CD14-positive monocyte (primary cell): ENCODE measurements at regions of chr17 and their contacts with region 1.

Region 1: DNA sequence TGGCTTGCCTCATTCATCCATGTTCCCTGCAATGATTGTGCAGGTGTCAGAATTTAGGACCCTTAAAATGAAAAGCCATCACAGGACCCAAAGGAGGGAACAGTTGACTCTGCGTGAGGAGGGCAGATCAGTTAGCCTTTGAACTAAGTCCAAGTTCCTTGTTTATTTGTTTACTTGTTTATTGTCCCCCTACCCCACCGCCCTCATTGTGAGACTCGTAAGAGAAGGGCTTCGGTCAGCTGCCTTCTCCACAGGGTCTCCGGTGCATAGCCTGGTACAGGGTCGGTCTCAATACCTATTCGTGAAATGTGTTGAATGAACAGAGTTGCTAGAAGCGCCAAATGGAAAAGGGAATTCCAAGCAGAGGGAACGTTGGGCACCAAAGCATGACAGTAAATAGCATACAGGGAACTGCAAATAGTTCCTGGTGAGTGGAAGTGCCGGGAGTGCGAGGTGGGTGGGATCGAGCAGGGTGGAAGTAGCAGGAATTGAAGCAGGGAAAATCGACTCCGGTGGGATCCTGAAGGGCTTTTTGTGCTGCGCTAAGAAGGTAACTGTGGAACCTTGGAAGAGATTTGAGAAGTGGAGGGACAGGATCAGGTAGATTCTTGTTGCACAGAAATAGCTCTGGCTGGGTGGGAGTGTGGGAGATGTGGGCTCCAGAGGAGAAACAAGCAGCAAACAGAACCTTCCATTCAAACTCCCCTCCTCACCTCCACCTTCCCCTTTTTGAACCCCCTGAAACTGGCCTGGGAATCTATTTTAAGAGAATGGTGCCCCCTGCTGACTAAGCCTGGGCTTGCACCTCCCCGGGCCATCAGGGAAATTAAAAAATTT is 12.7 kb downstream of the SLC35B1 start:
- DNase-seq: peak; percentile 42 to 68 (median 55)
- H3K4me3 ChIP-seq: no peak overlapping the region
- H3K4me3 Mint-ChIP-seq: peak overlapping the region in 1 of 2 donors; percentile 54
- H3K27ac ChIP-seq: no peak overlapping the region
- H3K27ac Mint-ChIP-seq: peak overlapping the region in 2 of 7 donors; percentile 28 to 68
- H3K4me1 ChIP-seq: peaks cover 19 to 20% of the 10 kb centered on the region in 2 donors
- H3K4me1 Mint-ChIP-seq: peaks cover 24% of the 10 kb centered on the region
- H3K27me3 ChIP-seq: no peaks in the 10 kb centered on the region
- H3K27me3 Mint-ChIP-seq: peaks cover 1 to 7% (median 5%) of the 10 kb centered on the region in 3 donors
- CTCF ChIP-seq: peak; percentile 98

Region 2: DNA sequence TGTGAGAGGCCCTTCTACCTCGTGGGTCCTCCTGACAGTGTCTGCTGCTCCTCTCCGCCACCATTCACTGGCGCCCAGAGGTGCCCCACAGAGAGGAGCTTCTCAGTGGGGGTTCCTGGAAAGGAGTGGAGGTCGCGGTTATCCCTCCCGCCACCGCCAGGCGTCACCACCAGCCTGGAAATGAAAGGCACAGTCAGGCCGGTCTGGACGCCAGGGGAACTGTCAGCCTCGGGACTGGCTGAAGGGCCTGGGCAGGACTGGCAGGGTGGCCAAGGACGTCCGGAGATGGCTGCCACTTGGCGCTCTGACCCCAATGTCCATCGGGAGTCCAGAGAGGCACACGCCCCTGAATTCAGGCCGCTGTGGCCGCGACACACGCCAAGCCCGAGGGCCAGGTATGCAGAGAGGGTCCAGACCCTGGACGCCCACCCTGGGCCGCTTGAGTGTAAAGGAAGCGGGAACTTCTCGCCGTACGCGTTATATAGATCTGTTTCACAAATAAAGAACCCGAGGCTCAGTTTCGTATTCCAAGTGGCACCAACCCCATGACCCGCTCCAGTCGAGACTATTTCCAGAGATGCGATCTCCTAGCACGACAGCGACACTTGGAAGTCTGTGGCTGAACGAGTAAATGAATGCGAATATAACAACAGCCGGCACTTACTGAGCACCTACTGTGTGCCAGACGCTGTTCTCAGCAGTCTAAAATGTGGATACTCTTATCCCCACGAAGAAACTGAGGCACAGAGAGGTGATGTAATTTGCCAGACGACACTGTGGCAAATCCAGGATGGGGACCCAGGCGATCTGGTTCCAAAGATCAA is 127.0 kb before region 1 on chr17:
- intact Hi-C with region 1: loop called (anchors 1 to 2 kb)
- DNase-seq: peak; percentile 80 to 83 (median 82)
- H3K4me3 ChIP-seq: peak overlapping the region; percentile 5 to 76 (median 39)
- H3K4me3 Mint-ChIP-seq: peak overlapping the region; percentile 79 to 87
- H3K27ac ChIP-seq: no peak overlapping the region
- H3K27ac Mint-ChIP-seq: peak overlapping the region in 2 of 7 donors; percentile 37 to 60
- H3K4me1 ChIP-seq: peaks cover 14 to 18% of the 10 kb centered on the region in 2 donors
- H3K4me1 Mint-ChIP-seq: peaks cover 17% of the 10 kb centered on the region
- H3K27me3 ChIP-seq: peaks cover 3 to 34% of the 10 kb centered on the region in 2 donors
- H3K27me3 Mint-ChIP-seq: peaks cover 39 to 53% (median 48%) of the 10 kb centered on the region in 3 donors
- CTCF ChIP-seq: peak; percentile 97

Region 3: GRCh38 chr17:49575579-49576087 is 119.4 kb before region 1 on chr17 and contains the start of gene NXPH3:
- intact Hi-C with region 1: loop called (anchors 2 kb)
- DNase-seq: peak; percentile 28 to 53 (median 33)
- H3K4me3 ChIP-seq: peak within 1 kb of the TSS in 1 of 3 experiments; percentile 68
- H3K4me3 Mint-ChIP-seq: peak within 1 kb of the TSS; percentile 63 to 89
- H3K27ac ChIP-seq: no peak within 1 kb of the TSS
- H3K27ac Mint-ChIP-seq: no peak within 1 kb of the TSS
- H3K4me1 ChIP-seq: peaks cover 10 to 19% of the 10 kb centered on the region in 2 donors
- H3K4me1 Mint-ChIP-seq: peaks cover 11% of the 10 kb centered on the region
- H3K27me3 ChIP-seq: peaks cover 16 to 72% of the 10 kb centered on the region in 2 donors
- H3K27me3 Mint-ChIP-seq: peaks cover 64 to 83% (median 70%) of the 10 kb centered on the region in 3 donors
- CTCF ChIP-seq: peak; percentile 60
- polyA plus RNA-seq, gene NXPH3: not detected

Region 4: GRCh38 chr17:49616601-49617131 is 78.4 kb before region 1 on chr17:
- intact Hi-C with region 1: loop called in 1 of 2 experiments (anchors 10 kb)
- DNase-seq: peak; percentile 6 to 20 (median 13)
- H3K4me3 ChIP-seq: no peak overlapping the region
- H3K4me3 Mint-ChIP-seq: peak overlapping the region; percentile 37 to 54
- H3K27ac ChIP-seq: peak overlapping the region in 1 of 2 donors; percentile 34
- H3K27ac Mint-ChIP-seq: peak overlapping the region; percentile 21 to 85 (median 44)
- H3K4me1 ChIP-seq: peaks cover 20 to 39% of the 10 kb centered on the region in 2 donors
- H3K4me1 Mint-ChIP-seq: peaks cover 37% of the 10 kb centered on the region
- H3K27me3 ChIP-seq: no peaks in the 10 kb centered on the region
- H3K27me3 Mint-ChIP-seq: peaks cover 0 to 2% (median 0%) of the 10 kb centered on the region in 3 donors
- CTCF ChIP-seq: no peak

Region 5: GRCh38 chr17:49677933-49678847 is 16.9 kb before region 1 on chr17 and contains the start of gene SPOP:
- intact Hi-C with region 1: no loop called
- DNase-seq: peak; percentile 98 to 100 (median 99)
- H3K4me3 ChIP-seq: peak within 1 kb of the TSS; percentile 70 to 81 (median 79)
- H3K4me3 Mint-ChIP-seq: peak within 1 kb of the TSS; percentile 91 to 95
- H3K27ac ChIP-seq: peak within 1 kb of the TSS; percentile 96
- H3K27ac Mint-ChIP-seq: peak within 1 kb of the TSS; percentile 98 to 100 (median 100)
- H3K4me1 ChIP-seq: peaks cover 41 to 50% of the 10 kb centered on the region in 2 donors
- H3K4me1 Mint-ChIP-seq: peaks cover 49% of the 10 kb centered on the region
- H3K27me3 ChIP-seq: no peaks in the 10 kb centered on the region
- H3K27me3 Mint-ChIP-seq: peaks cover 0 to 4% (median 0%) of the 10 kb centered on the region in 3 donors
- CTCF ChIP-seq: no peak
- polyA plus RNA-seq, gene SPOP: 41.3 to 65.5 (median 63.2) TPM

Region 6: GRCh38 chr17:49763735-49764558 is 68.9 kb after region 1 on chr17 and contains the start of gene FAM117A:
- intact Hi-C with region 1: no loop called
- DNase-seq: peak; percentile 92 to 94 (median 93)
- H3K4me3 ChIP-seq: peak within 1 kb of the TSS; percentile 71 to 97 (median 82)
- H3K4me3 Mint-ChIP-seq: peak within 1 kb of the TSS; percentile 92 to 96
- H3K27ac ChIP-seq: peak within 1 kb of the TSS; percentile 19 to 60
- H3K27ac Mint-ChIP-seq: peak within 1 kb of the TSS; percentile 85 to 93 (median 88)
- H3K4me1 ChIP-seq: peaks cover 32 to 50% of the 10 kb centered on the region in 2 donors
- H3K4me1 Mint-ChIP-seq: peaks cover 49% of the 10 kb centered on the region
- H3K27me3 ChIP-seq: no peaks in the 10 kb centered on the region
- H3K27me3 Mint-ChIP-seq: peaks cover 0 to 3% (median 0%) of the 10 kb centered on the region in 3 donors
- CTCF ChIP-seq: no peak
- polyA plus RNA-seq, gene FAM117A: 11.8 to 34.9 (median 17.9) TPM

Region 7: GRCh38 chr17:49887086-49888028 is 192.3 kb after region 1 on chr17:
- intact Hi-C with region 1: no loop called
- DNase-seq: no peak
- H3K4me3 ChIP-seq: no peak overlapping the region
- H3K4me3 Mint-ChIP-seq: peak overlapping the region in 1 of 2 donors; percentile 51
- H3K27ac ChIP-seq: no peak overlapping the region
- H3K27ac Mint-ChIP-seq: no peak overlapping the region
- H3K4me1 ChIP-seq: peaks cover 9 to 11% of the 10 kb centered on the region in 2 donors
- H3K4me1 Mint-ChIP-seq: peaks cover 8% of the 10 kb centered on the region
- H3K27me3 ChIP-seq: peaks cover 8 to 44% of the 10 kb centered on the region in 2 donors
- H3K27me3 Mint-ChIP-seq: peaks cover 47 to 79% (median 60%) of the 10 kb centered on the region in 3 donors
- CTCF ChIP-seq: no peak